Lower lobe of right lung (tissue), 2 donors: ENCODE measurements at regions of chr15 and their contacts with region 1.

Region 1: DNA sequence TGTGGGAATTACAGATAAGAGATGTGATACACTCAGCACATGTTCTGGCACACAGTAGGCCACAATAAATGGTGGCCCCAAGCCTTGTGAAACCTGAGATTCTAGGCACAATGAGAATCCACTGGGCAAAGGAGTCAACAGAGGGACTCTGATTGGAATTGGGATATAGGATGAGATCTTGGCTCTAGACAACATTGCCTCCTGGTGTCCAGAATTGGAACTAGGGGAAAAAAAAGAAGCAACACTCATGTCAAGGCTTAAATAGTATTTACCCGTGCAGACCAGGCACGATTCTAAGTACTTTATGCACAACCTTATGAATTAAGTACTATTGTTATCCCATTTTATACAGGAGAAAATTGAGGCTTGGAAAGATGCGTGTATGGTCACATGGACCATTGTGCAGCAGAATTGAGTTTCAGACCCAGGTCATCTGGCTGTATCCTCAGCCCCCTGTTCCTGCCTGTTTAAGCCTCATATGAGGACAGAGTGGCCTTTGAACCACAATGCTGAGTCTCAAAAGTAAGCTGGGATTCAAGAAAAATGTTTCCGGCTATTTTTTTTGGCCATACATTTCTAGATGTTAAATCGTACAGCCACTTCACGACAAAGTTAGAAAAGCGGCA is 124.8 kb downstream of the SV2B start:
- DNase-seq: no peak
- ATAC-seq: peak; percentile 47 to 66
- H3K4me3 ChIP-seq: no peak overlapping the region
- H3K27ac ChIP-seq: no peak overlapping the region
- H3K4me1 ChIP-seq: no peaks in the 10 kb centered on the region
- H3K27me3 ChIP-seq: peaks cover 11% of the 10 kb centered on the region
- CTCF ChIP-seq: peak; percentile 72

Region 2: DNA sequence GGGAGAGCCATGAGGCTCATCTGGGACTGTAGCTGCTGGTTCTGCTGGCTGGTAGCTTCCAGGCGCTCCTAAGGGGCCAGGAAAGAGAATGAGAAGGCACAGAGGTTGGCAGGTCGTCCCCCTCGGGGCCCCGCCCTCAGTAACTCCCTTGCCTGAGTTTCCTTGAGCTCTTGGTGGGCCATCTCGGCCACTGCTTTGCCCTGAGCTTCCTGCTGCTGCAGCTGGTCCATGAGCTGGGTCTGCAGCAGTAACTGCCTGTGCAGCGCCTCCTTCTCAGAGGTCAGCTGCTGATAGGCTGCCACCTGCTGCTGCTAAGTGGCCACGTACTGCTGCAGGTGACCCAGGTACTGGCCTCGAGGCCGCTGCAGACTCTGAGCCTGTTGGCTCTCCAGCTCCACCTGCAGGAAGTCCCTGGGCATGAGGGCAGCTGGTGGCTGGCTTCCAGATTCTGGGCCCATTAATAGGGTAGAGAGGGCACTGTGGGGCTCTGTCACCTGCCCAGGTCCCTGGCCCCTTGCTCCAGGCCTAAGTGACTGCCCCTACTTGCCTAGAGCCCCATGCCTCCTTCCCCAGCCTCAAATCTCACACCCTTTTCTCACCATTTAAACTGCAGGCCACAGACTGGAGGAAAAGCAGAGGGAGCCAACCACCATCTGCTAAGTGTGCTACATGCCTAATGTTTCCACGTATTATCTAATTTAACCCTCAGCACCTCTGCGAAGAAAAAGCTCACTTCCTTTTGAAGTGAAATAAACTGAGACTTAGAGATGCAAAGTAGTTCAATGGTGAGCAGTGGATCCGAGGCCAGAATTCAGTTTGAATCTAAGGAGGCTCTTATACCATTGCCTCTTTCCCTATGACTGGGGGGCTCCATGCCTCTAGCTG is 191.7 kb before region 1 on chr15:
- intact Hi-C with region 1: no loop called
- DNase-seq: peak; percentile 87
- ATAC-seq: peak; percentile 92
- H3K4me3 ChIP-seq: no peak overlapping the region
- H3K27ac ChIP-seq: no peak overlapping the region
- H3K4me1 ChIP-seq: no peaks in the 10 kb centered on the region
- H3K27me3 ChIP-seq: peaks cover 3% of the 10 kb centered on the region
- CTCF ChIP-seq: peak; percentile 75

Region 3: DNA sequence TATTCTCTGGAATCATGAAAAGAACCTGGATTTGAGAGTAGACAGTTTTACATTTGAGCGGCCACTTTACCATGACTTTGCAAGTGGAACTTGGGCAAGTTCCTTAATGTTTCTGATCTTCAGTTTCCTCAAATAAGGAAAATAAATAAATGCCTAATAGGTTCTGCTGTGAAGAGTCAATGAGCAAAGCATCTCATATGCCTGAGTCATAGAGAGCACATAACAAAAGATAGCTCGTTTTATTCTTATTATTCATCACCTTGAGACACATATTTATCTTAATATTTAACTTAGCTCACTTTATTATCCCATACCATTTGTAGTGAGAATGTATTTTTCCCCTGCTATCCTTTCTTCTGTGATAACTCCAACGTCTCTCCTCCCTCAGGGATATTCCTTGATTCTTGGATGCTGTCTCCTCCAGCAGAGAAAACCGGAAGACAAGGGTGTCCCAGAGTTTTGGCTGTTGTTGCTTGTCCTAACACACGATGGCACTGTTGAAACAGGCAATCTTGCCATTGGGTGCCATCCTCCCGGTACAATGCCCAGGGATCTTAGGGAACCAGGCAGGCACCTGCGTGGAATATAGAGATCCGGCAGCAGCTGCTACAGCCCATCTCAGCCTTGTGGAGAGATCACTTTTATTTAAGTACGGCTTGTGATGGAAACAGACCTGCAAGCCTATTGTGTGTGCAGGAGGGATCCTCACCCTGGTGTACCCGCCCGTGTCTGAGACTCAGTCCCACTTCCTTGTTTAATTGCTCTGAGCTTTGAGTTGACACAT is 169.1 kb before region 1 on chr15:
- intact Hi-C with region 1: loop called (anchors 5 kb)
- DNase-seq: no peak
- ATAC-seq: peak; percentile 83 to 88
- H3K4me3 ChIP-seq: no peak overlapping the region
- H3K27ac ChIP-seq: no peak overlapping the region
- H3K4me1 ChIP-seq: no peaks in the 10 kb centered on the region
- H3K27me3 ChIP-seq: peaks cover 33% of the 10 kb centered on the region
- CTCF ChIP-seq: peak; percentile 76

Region 4: DNA sequence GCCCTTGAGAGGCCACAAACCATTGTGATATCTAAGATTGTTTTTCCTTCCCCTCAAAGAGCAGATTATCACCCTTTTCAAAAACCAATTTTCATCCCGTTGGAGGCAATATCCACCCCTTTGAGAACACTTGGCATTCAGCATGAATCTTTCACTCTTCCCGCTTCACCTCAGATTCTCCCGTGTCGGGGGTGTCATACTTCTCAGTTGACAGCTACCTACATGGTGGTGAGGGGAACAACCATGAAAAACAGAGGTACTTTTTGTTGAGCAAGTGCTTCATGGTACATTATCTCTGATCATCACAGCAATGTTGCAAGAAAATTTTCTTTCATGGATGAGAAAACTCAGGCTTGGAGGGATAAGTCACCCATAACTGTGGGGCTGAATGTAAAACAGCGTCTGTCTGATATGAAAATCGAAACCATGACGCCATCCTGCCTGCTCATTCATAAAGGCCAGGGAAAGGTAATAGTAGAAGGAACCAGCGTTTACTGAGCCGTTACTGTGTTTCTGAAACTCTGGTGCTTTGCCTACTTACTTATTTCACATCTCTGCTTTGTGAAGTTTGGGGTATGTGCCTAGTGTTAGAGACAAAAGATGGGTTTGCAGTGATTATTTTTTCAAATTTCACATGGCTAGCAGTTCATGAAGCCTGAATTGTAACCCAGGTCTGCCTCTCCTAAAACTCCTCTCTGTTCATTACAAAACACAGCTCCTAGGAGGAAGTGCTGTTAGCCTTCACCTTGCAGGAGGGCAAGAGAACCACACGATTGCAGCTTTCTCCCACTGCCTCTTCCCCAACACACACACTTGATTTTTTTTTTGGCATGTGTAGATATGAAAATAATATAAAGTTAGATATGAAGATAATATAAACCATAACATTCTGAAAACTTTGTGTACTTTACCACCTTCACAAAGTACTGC is 89.4 kb before region 1 on chr15:
- intact Hi-C with region 1: no loop called
- DNase-seq: no peak
- ATAC-seq: no peak
- H3K4me3 ChIP-seq: no peak overlapping the region
- H3K27ac ChIP-seq: no peak overlapping the region
- H3K4me1 ChIP-seq: no peaks in the 10 kb centered on the region
- H3K27me3 ChIP-seq: no peaks in the 10 kb centered on the region
- CTCF ChIP-seq: no peak

Region 5: GRCh38 chr15:91263996-91264531 is 39.2 kb after region 1 on chr15:
- intact Hi-C with region 1: no loop called
- DNase-seq: no peak
- ATAC-seq: peak; percentile 21 to 56
- H3K4me3 ChIP-seq: no peak overlapping the region
- H3K27ac ChIP-seq: no peak overlapping the region
- H3K4me1 ChIP-seq: peaks cover 7% of the 10 kb centered on the region
- H3K27me3 ChIP-seq: peaks cover 3% of the 10 kb centered on the region
- CTCF ChIP-seq: no peak

Region 6: DNA sequence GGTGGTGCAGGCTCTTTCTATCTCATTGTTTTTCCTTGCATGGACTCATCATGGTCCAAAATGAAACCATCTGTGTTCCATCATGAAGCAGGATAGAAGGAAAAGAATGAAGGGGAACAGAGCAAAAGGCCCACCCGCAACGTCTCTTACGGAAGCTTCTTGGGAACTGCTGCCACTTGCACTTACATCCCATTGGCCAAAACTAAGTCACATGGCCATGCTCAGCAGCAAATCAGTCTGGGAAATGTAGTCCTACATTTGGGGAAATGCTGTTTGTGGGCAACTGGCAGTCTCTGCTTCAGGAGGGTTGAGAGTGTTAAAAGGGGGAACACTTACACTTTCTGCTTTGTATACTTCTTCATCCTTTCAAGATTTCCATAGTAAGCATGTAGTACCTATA is 66.8 kb after region 1 on chr15:
- intact Hi-C with region 1: no loop called
- DNase-seq: no peak
- ATAC-seq: peak in 1 of 2 donors; percentile 40
- H3K4me3 ChIP-seq: no peak overlapping the region
- H3K27ac ChIP-seq: no peak overlapping the region
- H3K4me1 ChIP-seq: no peaks in the 10 kb centered on the region
- H3K27me3 ChIP-seq: no peaks in the 10 kb centered on the region
- CTCF ChIP-seq: no peak